SK-N-SH (cell line): ENCODE measurements at regions of chr5 and their contacts with region 1.

Region 1: DNA sequence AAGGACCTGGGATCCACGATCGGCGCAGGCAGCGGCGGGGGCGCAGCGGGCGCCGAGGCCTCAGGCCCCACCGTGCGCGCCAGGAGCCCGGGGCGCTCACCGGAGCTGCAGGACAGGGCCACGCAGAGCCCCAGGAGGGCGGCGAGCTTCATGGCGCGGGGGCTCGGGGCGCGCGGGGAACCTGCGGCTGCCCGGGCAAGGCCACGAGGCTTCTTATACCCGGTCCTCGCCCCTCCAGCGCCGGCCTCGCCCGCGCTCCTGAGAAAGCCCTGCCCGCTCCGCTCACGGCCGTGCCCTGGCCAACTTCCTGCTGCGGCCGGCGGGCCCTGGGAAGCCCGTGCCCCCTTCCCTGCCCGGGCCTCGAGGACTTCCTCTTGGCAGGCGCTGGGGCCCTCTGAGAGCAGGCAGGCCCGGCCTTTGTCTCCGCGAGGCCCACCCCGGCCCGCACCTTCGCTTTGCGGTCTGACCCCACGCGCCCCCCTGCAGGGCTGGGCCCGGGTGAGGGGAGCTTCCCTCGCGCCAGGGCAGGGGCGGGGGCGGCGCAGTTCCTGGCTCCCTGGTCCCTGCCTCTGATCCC is at the start of gene SCGB3A1:
- DNase-seq: peak; percentile 57
- H3K4me3 ChIP-seq: peak within 1 kb of the TSS in 1 of 2 experiments; percentile 9; a peak in 1 of 4 replicates
- H3K27ac ChIP-seq: no peak within 1 kb of the TSS
- H3K4me1 ChIP-seq: no peaks in the 10 kb centered on the region
- H3K27me3 ChIP-seq: peaks cover 53% of the 10 kb centered on the region; the same call in 1 of the 2 replicates
- CTCF ChIP-seq: no peak
- EP300 ChIP-seq: no peak
- RAD21 ChIP-seq: no peak
- polyA plus RNA-seq, gene SCGB3A1: not detected in 2 replicates

Region 2: GRCh38 chr5:180575571-180575970 is 15.8 kb before region 1 on chr5:
- CTCF ChIA-PET with region 1: no interaction called
- POLR2A ChIA-PET with region 1: no interaction called
- DNase-seq: no peak
- H3K4me3 ChIP-seq: no peak overlapping the region
- H3K27ac ChIP-seq: peak overlapping the region in 1 of 2 experiments; percentile 16; a peak in 1 of 4 replicates
- H3K4me1 ChIP-seq: 0 out of 4 replicates have a peak, but pooled peaks cover 0 to 9% of the 10 kb centered on the region in 2 experiments
- H3K27me3 ChIP-seq: no peaks in the 10 kb centered on the region
- CTCF ChIP-seq: no peak
- EP300 ChIP-seq: no peak
- RAD21 ChIP-seq: no peak

Region 3: DNA sequence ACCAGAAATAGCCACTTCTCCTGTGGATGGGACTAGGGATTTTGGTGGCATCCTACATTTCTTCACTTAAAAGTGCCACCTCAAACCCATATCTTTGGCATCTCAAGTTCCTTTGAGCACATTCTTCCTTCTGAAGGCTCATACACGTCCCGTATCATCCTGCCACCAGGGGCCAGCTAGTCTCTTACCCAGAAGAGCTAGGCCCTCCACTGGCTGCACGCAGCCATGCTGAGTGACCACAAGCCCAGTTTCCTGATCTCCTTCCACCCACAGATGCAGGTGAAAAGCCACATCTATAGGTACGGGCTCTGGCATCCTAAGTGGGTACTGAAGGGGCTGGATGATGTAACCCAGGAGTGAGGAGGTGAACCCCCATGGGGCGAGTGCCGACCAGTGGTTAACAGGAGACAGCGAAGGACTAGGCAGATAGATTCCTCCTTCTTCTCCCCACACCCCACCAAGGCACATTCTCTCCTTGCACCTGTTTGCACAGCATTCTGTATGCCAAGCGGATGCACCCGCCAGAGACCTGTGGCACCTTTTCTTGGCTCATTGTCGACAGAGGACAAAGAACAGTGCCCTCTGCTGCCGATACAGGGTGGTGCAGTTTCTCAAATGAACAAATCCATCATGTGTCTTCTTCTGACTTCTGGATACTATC is 14.3 kb after region 1 on chr5:
- CTCF ChIA-PET with region 1: interaction called, 21 read pairs
- POLR2A ChIA-PET with region 1: no interaction called
- DNase-seq: peak; percentile 74
- H3K4me3 ChIP-seq: peak overlapping the region in 1 of 2 experiments; percentile 48; a peak in 1 of 4 replicates
- H3K27ac ChIP-seq: no peak overlapping the region
- H3K4me1 ChIP-seq: no peaks in the 10 kb centered on the region
- H3K27me3 ChIP-seq: no peaks in the 10 kb centered on the region; the same call in 1 of the 2 replicates
- CTCF ChIP-seq: peak; percentile 76
- EP300 ChIP-seq: no peak
- RAD21 ChIP-seq: peak; percentile 59

Region 4: DNA sequence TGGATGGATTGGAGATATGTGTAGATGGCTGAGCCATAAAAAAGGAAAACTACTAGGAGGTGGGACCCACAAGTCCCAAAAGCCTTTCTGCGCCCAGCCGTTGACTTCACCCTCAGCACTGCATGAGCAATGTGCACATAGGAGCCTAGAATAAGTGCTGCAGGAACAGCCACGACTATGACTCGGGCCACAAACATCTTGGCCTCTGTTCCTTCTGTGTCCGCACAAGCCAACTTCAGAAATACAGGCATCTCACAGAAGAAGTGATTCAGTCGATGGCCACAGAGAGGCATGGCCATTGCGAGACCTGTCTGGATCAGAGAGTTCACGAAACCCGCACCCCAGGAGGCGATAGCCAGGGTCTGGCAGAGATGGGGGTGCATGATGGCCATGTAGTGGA is 147.9 kb after region 1 on chr5:
- CTCF ChIA-PET with region 1: no interaction called
- POLR2A ChIA-PET with region 1: no interaction called
- DNase-seq: no peak
- H3K4me3 ChIP-seq: no peak overlapping the region
- H3K27ac ChIP-seq: no peak overlapping the region
- H3K4me1 ChIP-seq: no peaks in the 10 kb centered on the region
- H3K27me3 ChIP-seq: peaks cover 19% of the 10 kb centered on the region; the same call in 1 of the 2 replicates
- CTCF ChIP-seq: no peak
- EP300 ChIP-seq: no peak
- RAD21 ChIP-seq: no peak

Region 5: DNA sequence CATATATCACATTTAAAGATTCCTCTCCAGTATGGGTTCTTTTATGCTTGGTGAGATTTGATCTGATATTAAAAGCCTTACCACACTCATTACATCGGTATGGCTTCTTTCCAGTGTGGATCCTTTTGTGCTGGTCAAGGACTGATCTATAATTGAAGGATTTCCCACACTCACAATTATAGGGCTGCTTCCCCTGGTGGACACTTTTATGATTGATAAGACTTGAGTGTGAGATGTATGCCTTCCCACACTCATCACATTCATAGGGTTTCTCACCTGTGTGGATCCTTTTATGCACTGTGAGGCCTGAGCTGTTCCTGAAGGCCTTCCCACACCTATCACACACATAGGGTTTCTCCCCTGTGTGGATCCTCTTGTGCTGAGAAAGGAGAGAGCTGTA is 257.5 kb after region 1 on chr5:
- CTCF ChIA-PET with region 1: no interaction called
- POLR2A ChIA-PET with region 1: no interaction called
- DNase-seq: no peak
- H3K4me3 ChIP-seq: no peak overlapping the region; a peak in 1 of 4 replicates
- H3K27ac ChIP-seq: no peak overlapping the region
- H3K4me1 ChIP-seq: no peaks in the 10 kb centered on the region
- H3K27me3 ChIP-seq: no peaks in the 10 kb centered on the region
- CTCF ChIP-seq: 0 out of 2 replicates have a peak, but pooled peaks have one; percentile 8
- EP300 ChIP-seq: no peak
- RAD21 ChIP-seq: no peak